ENCODE measurements at regions of chr16 and their contacts with region 1.

Region 1: GRCh38 chr16:6771956-6772355 is 560.7 kb upstream of the RBFOX1 start:
- DNase-seq: no peak
- ATAC-seq: no peak
- H3K4me3 ChIP-seq: no peak overlapping the region
- H3K27ac ChIP-seq: no peak overlapping the region
- H3K4me1 ChIP-seq: no peaks in the 10 kb centered on the region
- H3K27me3 ChIP-seq: peaks cover 0 to 7% (median 0%) of the 10 kb centered on the region in 7 donors
- CTCF ChIP-seq: no peak

Region 2: GRCh38 chr16:6602405-6602804 is 169.6 kb before region 1 on chr16:
- intact Hi-C with region 1: no loop called
- DNase-seq: no peak
- ATAC-seq: no peak
- H3K4me3 ChIP-seq: no peak overlapping the region
- H3K27ac ChIP-seq: no peak overlapping the region
- H3K4me1 ChIP-seq: no peaks in the 10 kb centered on the region
- H3K27me3 ChIP-seq: no peaks in the 10 kb centered on the region
- CTCF ChIP-seq: no peak

Region 3: GRCh38 chr16:6714510-6714909 is 57.4 kb before region 1 on chr16:
- intact Hi-C with region 1: no loop called
- DNase-seq: no peak
- ATAC-seq: no peak
- H3K4me3 ChIP-seq: no peak overlapping the region
- H3K27ac ChIP-seq: no peak overlapping the region
- H3K4me1 ChIP-seq: no peaks in the 10 kb centered on the region
- H3K27me3 ChIP-seq: no peaks in the 10 kb centered on the region
- CTCF ChIP-seq: no peak

Region 4: DNA sequence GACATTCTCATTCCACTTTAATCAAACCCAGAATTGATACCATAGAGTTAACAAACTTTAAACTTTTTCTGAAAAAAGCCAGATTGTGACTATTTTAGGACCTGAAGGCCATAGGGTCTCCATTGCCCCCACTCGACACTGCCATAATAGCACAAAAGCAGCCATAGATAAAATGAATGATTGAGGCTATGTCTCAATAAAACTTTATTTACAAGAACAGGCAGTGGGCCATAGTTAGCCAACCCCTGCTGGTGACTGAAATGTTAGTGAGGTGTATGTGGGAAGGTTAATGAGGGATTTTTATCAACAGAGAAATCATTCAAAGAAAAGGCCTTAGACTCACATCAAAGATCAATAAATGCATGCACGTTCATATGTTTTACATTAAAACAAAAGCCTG is 288.1 kb after region 1 on chr16:
- intact Hi-C with region 1: loop called in 1 of 10 experiments (anchors 5 kb)
- DNase-seq: no peak
- ATAC-seq: no peak
- H3K4me3 ChIP-seq: no peak overlapping the region
- H3K27ac ChIP-seq: no peak overlapping the region
- H3K4me1 ChIP-seq: no peaks in the 10 kb centered on the region
- H3K27me3 ChIP-seq: no peaks in the 10 kb centered on the region
- CTCF ChIP-seq: no peak

Region 5: GRCh38 chr16:7077636-7078035 is 305.7 kb after region 1 on chr16:
- intact Hi-C with region 1: no loop called
- DNase-seq: no peak
- ATAC-seq: no peak
- H3K4me3 ChIP-seq: no peak overlapping the region
- H3K27ac ChIP-seq: no peak overlapping the region
- H3K4me1 ChIP-seq: no peaks in the 10 kb centered on the region
- H3K27me3 ChIP-seq: no peaks in the 10 kb centered on the region
- CTCF ChIP-seq: no peak